Left colon (tissue), 2 donors: ENCODE measurements at regions of chr10 and their contacts with region 1.

Region 1: DNA sequence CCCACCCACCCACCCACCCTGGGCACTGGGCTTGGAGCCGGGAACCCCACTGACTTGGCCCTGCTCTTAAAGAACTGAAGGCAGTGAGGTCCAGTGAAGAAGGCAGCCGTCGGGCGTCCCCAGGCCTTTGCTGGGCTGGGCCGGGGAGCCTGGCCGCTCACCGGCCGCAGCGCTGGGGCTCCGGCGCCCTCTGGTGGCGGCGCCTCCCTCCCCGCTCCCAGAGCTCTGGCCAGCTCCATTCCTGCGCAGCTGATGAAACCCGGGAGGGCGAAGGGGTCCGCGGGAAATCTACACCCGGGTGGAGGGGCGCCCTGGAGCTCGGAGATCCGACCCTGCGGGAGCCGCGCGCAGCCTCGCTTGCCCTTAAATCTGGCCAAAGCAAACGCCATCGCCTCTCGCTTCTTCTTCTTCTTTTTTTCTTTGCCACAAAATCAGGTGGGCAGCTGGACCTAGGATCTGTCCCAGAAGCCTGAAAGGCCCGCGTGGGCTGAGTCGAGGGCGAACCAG is 1.7 kb upstream of the CXCL12 start:
- DNase-seq: peak; percentile 33 to 64
- ATAC-seq: peak; percentile 90

Region 2: DNA sequence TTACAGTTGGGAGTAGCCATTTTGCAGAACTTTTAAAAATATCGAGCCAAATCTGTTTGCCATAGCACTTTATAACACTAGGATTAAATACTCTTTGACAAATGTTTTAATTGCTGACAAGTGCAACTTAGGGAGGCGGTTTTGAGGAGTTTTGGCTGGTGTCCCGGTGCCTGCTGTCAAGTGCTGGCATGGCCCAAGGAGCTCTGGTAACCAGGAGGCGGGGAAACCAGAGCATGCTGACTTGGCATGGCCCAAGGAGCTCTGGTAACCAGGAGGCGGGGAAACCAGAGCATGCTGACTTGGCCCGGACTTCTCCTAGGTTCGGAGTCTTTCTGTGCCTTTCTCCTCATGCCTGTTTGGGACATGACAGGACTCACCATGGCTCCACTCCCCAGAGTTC is 707.1 kb before region 1 on chr10:
- intact Hi-C with region 1: loop called (anchors 5 to 10 kb)
- DNase-seq: peak; percentile 28 to 63
- ATAC-seq: no peak

Region 3: GRCh38 chr10:43689955-43690771 is 696.4 kb before region 1 on chr10:
- intact Hi-C with region 1: loop called in 1 of 2 experiments (anchors 10 kb)
- DNase-seq: peak; percentile 74 to 88
- ATAC-seq: peak; percentile 99

Region 4: GRCh38 chr10:44233561-44234482 is 152.8 kb before region 1 on chr10:
- intact Hi-C with region 1: no loop called
- DNase-seq: peak; percentile 34 to 42
- ATAC-seq: no peak